ENCODE measurements at regions of chr1 and their contacts with region 1.

Region 1: DNA sequence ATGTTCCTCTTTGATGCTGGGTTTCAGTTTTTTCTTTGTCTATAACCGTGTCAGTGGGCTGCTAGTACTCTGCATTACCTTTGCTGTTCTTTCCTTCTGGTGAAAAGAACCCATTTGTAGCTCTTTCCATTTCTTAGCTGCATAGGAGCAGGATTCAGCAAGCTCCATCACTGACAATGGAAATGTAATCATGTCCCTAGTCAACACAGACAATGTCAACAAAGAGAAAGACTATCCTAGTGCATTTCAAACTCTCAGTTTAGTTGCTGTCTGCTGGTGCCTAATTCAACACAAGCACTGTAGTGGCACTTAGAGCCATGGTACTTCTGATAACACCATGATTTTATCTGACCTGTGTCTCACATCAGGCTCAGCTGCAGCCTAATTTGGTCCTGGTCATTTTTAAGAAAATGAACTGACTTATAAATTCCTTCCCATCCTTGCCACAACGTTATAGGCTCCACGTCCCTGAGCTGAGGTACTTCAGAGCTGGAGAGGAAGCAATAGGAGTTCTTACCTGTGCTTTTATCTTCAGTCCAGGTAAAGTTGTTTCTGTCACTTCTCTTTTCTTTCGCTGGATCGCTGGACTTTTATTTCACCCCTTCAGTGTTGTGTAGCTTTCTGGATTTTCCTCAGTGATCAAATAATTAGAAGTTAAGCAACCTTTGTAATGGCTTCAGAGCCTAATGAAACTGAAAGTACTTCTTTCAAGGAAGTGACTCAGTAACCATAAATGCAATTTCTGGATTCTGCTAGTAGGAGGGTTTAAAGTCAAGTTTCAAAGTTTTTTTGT is at the start of gene GBP3:
- DNase-seq: no peak
- ATAC-seq: peak; percentile 82
- H3K4me3 Mint-ChIP-seq: peak within 1 kb of the TSS; percentile 79
- H3K27ac Mint-ChIP-seq: peak within 1 kb of the TSS; percentile 93
- H3K4me1 Mint-ChIP-seq: peaks cover 54% of the 10 kb centered on the region
- H3K27me3 Mint-ChIP-seq: no peaks in the 10 kb centered on the region
- total RNA-seq, gene GBP3: 4.8 to 5.8 TPM

Region 2: GRCh38 chr1:89047734-89048133 is 25.4 kb after region 1 on chr1:
- CTCF ChIA-PET with region 1: interaction called, 15 read pairs
- POLR2A ChIA-PET with region 1: no interaction called
- intact Hi-C with region 1: loop called in 1 of 2 experiments (anchors 1 kb)
- DNase-seq: no peak
- ATAC-seq: no peak
- H3K4me3 Mint-ChIP-seq: no peak overlapping the region
- H3K27ac Mint-ChIP-seq: no peak overlapping the region
- H3K4me1 Mint-ChIP-seq: peaks cover 7% of the 10 kb centered on the region
- H3K27me3 Mint-ChIP-seq: no peaks in the 10 kb centered on the region